Esophagus squamous epithelium (tissue), 5 donors: ENCODE measurements at regions of chr19 and their contacts with region 1.

Region 1: GRCh38 chr19:53103198-53103944 is at the start of gene ZNF160:
- DNase-seq: peak; percentile 84
- H3K4me3 ChIP-seq: peak within 1 kb of the TSS; percentile 53 to 97 (median 84)
- H3K27ac ChIP-seq: peak within 1 kb of the TSS; percentile 84 to 95 (median 92)
- H3K4me1 ChIP-seq: peaks cover 8 to 37% (median 18%) of the 10 kb centered on the region in 3 donors
- H3K27me3 ChIP-seq: no peaks in the 10 kb centered on the region
- CTCF ChIP-seq: no peak
- POLR2A ChIP-seq: peak in 3 of 4 donors; percentile 50 to 86 (median 77)
- total RNA-seq, gene ZNF160: 11.7 to 36.6 (median 13.5) TPM

Region 2: GRCh38 chr19:52946320-52947275 is 156.8 kb before region 1 on chr19:
- intact Hi-C with region 1: no loop called
- DNase-seq: no peak
- H3K4me3 ChIP-seq: peak overlapping the region in 1 of 4 donors; percentile 27
- H3K27ac ChIP-seq: no peak overlapping the region
- H3K4me1 ChIP-seq: peaks cover under 1 to 43% (median 3%) of the 10 kb centered on the region in 3 donors
- H3K27me3 ChIP-seq: no peaks in the 10 kb centered on the region
- CTCF ChIP-seq: no peak
- POLR2A ChIP-seq: no peak

Region 3: DNA sequence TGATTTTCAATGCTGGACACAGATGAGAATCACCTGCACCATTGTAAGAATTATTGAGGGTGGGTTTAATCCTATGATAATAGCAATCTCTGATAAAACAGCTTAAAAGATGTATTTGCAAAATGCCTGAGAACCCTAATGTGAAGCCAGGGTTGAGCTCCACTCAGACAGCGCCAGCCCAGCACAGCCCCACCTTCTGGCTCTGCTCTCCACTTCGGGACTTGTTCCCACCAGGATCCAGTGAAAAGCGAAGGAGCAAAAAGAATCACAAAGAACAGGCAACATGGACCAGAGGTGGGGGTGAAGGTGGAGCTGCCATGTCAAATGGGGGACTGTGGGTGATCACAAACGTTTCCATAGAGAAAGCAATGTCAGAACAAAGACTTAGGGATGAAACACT is 122.0 kb before region 1 on chr19:
- intact Hi-C with region 1: no loop called
- DNase-seq: no peak
- H3K4me3 ChIP-seq: no peak overlapping the region
- H3K27ac ChIP-seq: no peak overlapping the region
- H3K4me1 ChIP-seq: no peaks in the 10 kb centered on the region
- H3K27me3 ChIP-seq: no peaks in the 10 kb centered on the region
- CTCF ChIP-seq: no peak
- POLR2A ChIP-seq: no peak

Region 4: GRCh38 chr19:53132141-53132991 is 29.0 kb after region 1 on chr19 and contains the start of gene ZNF415:
- intact Hi-C with region 1: loop called (anchors 1 kb)
- DNase-seq: no peak
- H3K4me3 ChIP-seq: peak within 1 kb of the TSS; percentile 36 to 66 (median 60)
- H3K27ac ChIP-seq: peak within 1 kb of the TSS; percentile 38 to 77 (median 72)
- H3K4me1 ChIP-seq: peaks cover 0 to 19% (median 0%) of the 10 kb centered on the region in 3 donors
- H3K27me3 ChIP-seq: no peaks in the 10 kb centered on the region
- CTCF ChIP-seq: peak in 1 of 6 experiments; percentile 9
- POLR2A ChIP-seq: no peak
- total RNA-seq, gene ZNF415: 0.26 to 4.6 (median 1.3) TPM

Region 5: GRCh38 chr19:53333463-53334449 is 230.4 kb after region 1 on chr19 and contains the start of gene ZNF845:
- intact Hi-C with region 1: no loop called
- DNase-seq: peak; percentile 71
- H3K4me3 ChIP-seq: peak within 1 kb of the TSS; percentile 61 to 87 (median 71)
- H3K27ac ChIP-seq: peak within 1 kb of the TSS; percentile 64 to 87 (median 80)
- H3K4me1 ChIP-seq: peaks cover 0 to 21% (median 4%) of the 10 kb centered on the region in 3 donors
- H3K27me3 ChIP-seq: no peaks in the 10 kb centered on the region
- CTCF ChIP-seq: no peak
- POLR2A ChIP-seq: peak in 1 of 4 donors; percentile 64
- total RNA-seq, gene ZNF845: 2.3 to 7.1 (median 4.4) TPM